Caco-2 (cell line): ENCODE measurements at regions of chr1 and their contacts with region 1.

Region 1: DNA sequence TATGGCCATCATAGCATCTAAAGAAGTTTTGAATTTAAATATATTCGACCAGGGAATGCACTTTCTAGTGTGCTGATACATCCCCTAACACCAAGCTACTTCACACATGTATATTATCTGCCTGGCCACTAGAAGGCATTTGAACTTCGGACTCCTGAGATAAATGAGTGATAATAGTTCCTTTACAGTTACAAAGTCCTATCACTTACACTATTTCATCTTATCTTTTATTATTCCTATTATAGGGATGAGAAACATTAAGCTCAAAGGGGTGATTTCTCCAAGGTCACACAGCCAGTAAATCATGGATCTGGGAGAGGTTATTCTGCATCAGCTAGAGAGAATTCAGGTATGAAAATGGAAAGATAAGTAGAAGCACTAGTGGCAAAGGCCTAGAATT is 40.3 kb downstream of the GPATCH2 start:
- DNase-seq: peak; percentile 37 to 41
- H3K4me3 ChIP-seq: no peak overlapping the region
- H3K4me3 Mint-ChIP-seq: no peak overlapping the region
- H3K27ac Mint-ChIP-seq: peak overlapping the region; percentile 10
- H3K4me1 ChIP-seq: peaks cover 28% of the 10 kb centered on the region
- H3K4me1 Mint-ChIP-seq: peaks cover 20% of the 10 kb centered on the region
- H3K27me3 ChIP-seq: no peaks in the 10 kb centered on the region
- H3K27me3 Mint-ChIP-seq: no peaks in the 10 kb centered on the region
- CTCF ChIP-seq: peak; percentile 34 to 35

Region 2: DNA sequence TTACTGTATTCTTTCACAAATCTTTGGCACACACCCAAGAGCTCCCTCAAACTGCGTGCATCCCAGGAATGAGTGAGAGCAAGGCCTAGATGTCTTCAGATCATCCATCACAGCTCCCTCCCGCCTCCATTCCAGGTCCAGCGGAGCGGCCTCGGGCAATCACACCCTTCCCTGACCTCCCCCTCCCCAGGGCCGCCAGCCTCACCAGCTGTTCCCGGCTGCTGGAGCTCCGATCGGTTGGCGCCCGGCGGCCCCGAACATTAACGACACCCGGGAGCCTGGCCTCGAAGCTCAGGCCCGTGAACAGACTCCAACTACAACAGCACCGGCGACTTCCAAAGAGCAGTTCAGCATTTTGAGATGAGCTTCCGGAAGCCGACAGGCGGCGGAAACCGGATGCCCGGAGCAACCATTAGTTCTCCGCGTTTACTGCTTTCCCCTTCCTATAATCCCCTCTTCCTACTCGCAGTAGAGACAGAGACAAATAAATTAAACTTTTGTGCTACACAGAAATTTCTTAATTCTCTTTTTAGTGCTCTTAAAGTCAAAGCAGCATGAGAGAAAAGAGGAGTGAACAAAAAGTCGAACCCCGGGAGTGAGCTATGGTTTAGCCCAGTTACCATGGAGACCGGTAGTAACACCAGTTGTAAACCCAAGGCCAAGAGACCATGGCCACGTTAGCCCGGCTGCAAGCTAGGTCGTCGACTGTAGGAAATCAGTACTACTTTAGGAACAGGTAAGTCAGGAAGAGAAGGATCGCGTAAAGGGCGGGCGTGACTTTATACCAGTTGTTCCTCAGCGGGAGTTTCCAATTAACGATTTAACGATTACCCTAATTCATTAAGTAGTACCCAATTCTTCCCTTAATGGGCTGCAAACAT is 40.4 kb after region 1 on chr1 and contains the starts of genes GPATCH2 and SPATA17:
- CTCF ChIA-PET with region 1: interaction called, 5 read pairs
- POLR2A ChIA-PET with region 1: interaction called, 6 read pairs
- intact Hi-C with region 1: loop called (anchors 2 kb)
- DNase-seq: peak; percentile 84 to 85
- H3K4me3 ChIP-seq: peak within 1 kb of the TSS; percentile 79
- H3K4me3 Mint-ChIP-seq: peak within 1 kb of the TSS; percentile 76
- H3K27ac Mint-ChIP-seq: peak within 1 kb of the TSS; percentile 97
- H3K4me1 ChIP-seq: 0 out of 2 replicates have a peak, but pooled peaks cover 11% of the 10 kb centered on the region
- H3K4me1 Mint-ChIP-seq: peaks cover 7% of the 10 kb centered on the region
- H3K27me3 ChIP-seq: no peaks in the 10 kb centered on the region
- H3K27me3 Mint-ChIP-seq: no peaks in the 10 kb centered on the region
- CTCF ChIP-seq: peak; percentile 12 to 14
- total RNA-seq, gene GPATCH2: 12.4 and 13.2 TPM in 2 replicates
- total RNA-seq, gene SPATA17: 0.84 and 1.1 TPM in 2 replicates